ENCODE measurements at regions of chr19 and their contacts with region 1.

Region 1: GRCh38 chr19:45250832-45251451 is at the start of gene MARK4:
- DNase-seq: peak; percentile 50
- H3K4me3 Mint-ChIP-seq: peak within 1 kb of the TSS; percentile 83
- H3K27ac Mint-ChIP-seq: peak within 1 kb of the TSS; percentile 93
- H3K4me1 Mint-ChIP-seq: peaks cover 20% of the 10 kb centered on the region
- H3K27me3 Mint-ChIP-seq: no peaks in the 10 kb centered on the region
- CTCF ChIP-seq: no peak
- total RNA-seq, gene MARK4: 22.4 and 24.2 TPM in 2 replicates

Region 2: DNA sequence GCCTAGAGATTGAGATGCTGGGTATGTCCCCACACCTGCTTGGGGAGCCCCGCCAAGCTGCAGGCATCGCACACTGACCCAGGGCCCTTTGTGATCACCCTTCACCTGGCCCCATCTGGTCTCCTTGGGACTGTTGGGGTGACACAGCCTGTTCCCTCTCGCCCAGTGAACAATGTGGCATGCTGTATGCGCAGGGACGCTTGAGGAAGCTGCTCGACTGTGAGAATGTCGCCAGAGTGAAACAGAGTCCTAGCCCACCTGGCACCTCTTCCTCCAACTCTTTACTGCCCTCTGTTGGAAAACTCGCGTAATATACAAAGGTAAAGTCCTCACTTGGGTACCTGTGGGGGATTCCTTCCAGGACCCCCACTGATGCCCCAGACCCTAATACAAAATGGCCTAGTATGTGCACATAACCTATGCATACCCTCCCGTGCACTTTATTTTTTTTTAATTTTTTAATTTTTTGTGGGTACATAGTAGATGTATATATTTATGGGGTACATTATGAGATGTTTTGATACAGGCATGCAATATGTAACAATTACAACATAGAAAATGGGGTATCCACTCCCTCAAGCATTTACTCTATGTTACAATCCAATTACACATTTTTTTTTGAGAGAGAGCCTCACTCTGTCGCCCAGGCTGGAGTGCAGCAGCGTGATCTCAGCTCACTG is 63.4 kb before region 1 on chr19:
- CTCF ChIA-PET with region 1: interaction called, 14 read pairs
- POLR2A ChIA-PET with region 1: no interaction called
- intact Hi-C with region 1: no loop called
- DNase-seq: peak; percentile 62
- H3K4me3 Mint-ChIP-seq: no peak overlapping the region
- H3K27ac Mint-ChIP-seq: no peak overlapping the region
- H3K4me1 Mint-ChIP-seq: peaks cover 5% of the 10 kb centered on the region
- H3K27me3 Mint-ChIP-seq: no peaks in the 10 kb centered on the region
- CTCF ChIP-seq: peak; percentile 69

Region 3: GRCh38 chr19:45478454-45479238 is 227.7 kb after region 1 on chr19:
- CTCF ChIA-PET with region 1: no interaction called
- POLR2A ChIA-PET with region 1: no interaction called
- intact Hi-C with region 1: loop called (anchors 5 kb)
- DNase-seq: peak; percentile 95
- H3K4me3 Mint-ChIP-seq: peak overlapping the region; percentile 76
- H3K27ac Mint-ChIP-seq: peak overlapping the region; percentile 99
- H3K4me1 Mint-ChIP-seq: peaks cover 14% of the 10 kb centered on the region
- H3K27me3 Mint-ChIP-seq: no peaks in the 10 kb centered on the region
- CTCF ChIP-seq: peak; percentile 97

Measured in MCF 10A (cell line).